Heart left ventricle (tissue), 16 donors: ENCODE measurements at regions of chr11 and their contacts with region 1.

Region 1: GRCh38 chr11:46743693-46744339 is 24.8 kb downstream of the F2 start:
- DNase-seq: no peak
- ATAC-seq: peak in 1 of 4 donors; percentile 24
- H3K4me3 ChIP-seq: no peak overlapping the region
- H3K27ac ChIP-seq: peak overlapping the region in 2 of 12 donors; percentile 7 to 18
- H3K4me1 ChIP-seq: peaks cover 0 to 6% (median 0%) of the 10 kb centered on the region in 12 donors
- H3K27me3 ChIP-seq: no peaks in the 10 kb centered on the region
- CTCF ChIP-seq: no peak
- POLR2A ChIP-seq: no peak

Region 2: GRCh38 chr11:46778416-46778815 is 34.6 kb after region 1 on chr11:
- intact Hi-C with region 1: loop called in 1 of 10 experiments (anchors 5 kb)
- DNase-seq: no peak
- ATAC-seq: no peak
- H3K4me3 ChIP-seq: no peak overlapping the region
- H3K27ac ChIP-seq: no peak overlapping the region
- H3K4me1 ChIP-seq: no peaks in the 10 kb centered on the region
- H3K27me3 ChIP-seq: no peaks in the 10 kb centered on the region
- CTCF ChIP-seq: no peak
- POLR2A ChIP-seq: no peak